B cell (primary cell): ENCODE measurements at regions of chr3 and their contacts with region 1.

Region 1: GRCh38 chr3:134473868-134474546 is 11.8 kb downstream of the ANAPC13 start:
- DNase-seq: peak; percentile 76
- ATAC-seq: peak; percentile 58
- H3K4me3 ChIP-seq: no peak overlapping the region
- H3K4me3 Mint-ChIP-seq: no peak overlapping the region
- H3K27ac ChIP-seq: no peak overlapping the region
- H3K27ac Mint-ChIP-seq: no peak overlapping the region
- H3K4me1 ChIP-seq: no peaks in the 10 kb centered on the region
- H3K4me1 Mint-ChIP-seq: no peaks in the 10 kb centered on the region
- H3K27me3 ChIP-seq: no peaks in the 10 kb centered on the region
- H3K27me3 Mint-ChIP-seq: no peaks in the 10 kb centered on the region
- CTCF ChIP-seq: peak; percentile 81

Region 2: GRCh38 chr3:133620066-133620784 is 853.8 kb before region 1 on chr3:
- CTCF ChIA-PET with region 1: no interaction called
- POLR2A ChIA-PET with region 1: no interaction called
- intact Hi-C with region 1: no loop called
- DNase-seq: peak; percentile 77
- ATAC-seq: peak; percentile 97
- H3K4me3 ChIP-seq: no peak overlapping the region
- H3K4me3 Mint-ChIP-seq: peak overlapping the region; percentile 52
- H3K27ac ChIP-seq: peak overlapping the region; percentile 33 to 59
- H3K27ac Mint-ChIP-seq: peak overlapping the region; percentile 83
- H3K4me1 ChIP-seq: peaks cover 0 to 12% of the 10 kb centered on the region in 2 donors
- H3K4me1 Mint-ChIP-seq: peaks cover 13% of the 10 kb centered on the region
- H3K27me3 ChIP-seq: no peaks in the 10 kb centered on the region
- H3K27me3 Mint-ChIP-seq: no peaks in the 10 kb centered on the region
- CTCF ChIP-seq: no peak

Region 3: DNA sequence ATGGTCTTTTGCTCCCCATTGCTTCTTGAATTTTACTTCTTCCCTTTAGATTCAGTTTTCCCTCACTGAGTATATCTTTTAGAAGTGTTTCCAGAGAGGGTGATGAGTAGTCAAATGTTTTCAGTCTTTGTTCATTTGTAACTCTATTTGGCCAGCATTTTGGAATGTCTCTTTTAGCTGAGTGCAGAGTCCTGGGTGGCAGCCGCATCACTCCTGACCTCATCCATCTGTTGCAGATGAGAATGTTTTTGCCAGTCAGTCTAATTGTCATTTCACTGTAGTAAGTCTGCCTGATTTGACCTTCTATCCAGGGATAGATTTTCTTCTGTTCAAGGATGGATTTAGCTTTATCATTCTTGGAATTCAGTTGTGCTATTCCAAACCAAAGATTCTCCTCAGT is 661.1 kb before region 1 on chr3:
- CTCF ChIA-PET with region 1: interaction called, 5 read pairs
- POLR2A ChIA-PET with region 1: no interaction called
- intact Hi-C with region 1: loop called (anchors 5 kb)
- DNase-seq: no peak
- ATAC-seq: no peak
- H3K4me3 ChIP-seq: no peak overlapping the region
- H3K4me3 Mint-ChIP-seq: no peak overlapping the region
- H3K27ac ChIP-seq: no peak overlapping the region
- H3K27ac Mint-ChIP-seq: no peak overlapping the region
- H3K4me1 ChIP-seq: no peaks in the 10 kb centered on the region
- H3K4me1 Mint-ChIP-seq: no peaks in the 10 kb centered on the region
- H3K27me3 ChIP-seq: no peaks in the 10 kb centered on the region
- H3K27me3 Mint-ChIP-seq: no peaks in the 10 kb centered on the region
- CTCF ChIP-seq: no peak

Region 4: DNA sequence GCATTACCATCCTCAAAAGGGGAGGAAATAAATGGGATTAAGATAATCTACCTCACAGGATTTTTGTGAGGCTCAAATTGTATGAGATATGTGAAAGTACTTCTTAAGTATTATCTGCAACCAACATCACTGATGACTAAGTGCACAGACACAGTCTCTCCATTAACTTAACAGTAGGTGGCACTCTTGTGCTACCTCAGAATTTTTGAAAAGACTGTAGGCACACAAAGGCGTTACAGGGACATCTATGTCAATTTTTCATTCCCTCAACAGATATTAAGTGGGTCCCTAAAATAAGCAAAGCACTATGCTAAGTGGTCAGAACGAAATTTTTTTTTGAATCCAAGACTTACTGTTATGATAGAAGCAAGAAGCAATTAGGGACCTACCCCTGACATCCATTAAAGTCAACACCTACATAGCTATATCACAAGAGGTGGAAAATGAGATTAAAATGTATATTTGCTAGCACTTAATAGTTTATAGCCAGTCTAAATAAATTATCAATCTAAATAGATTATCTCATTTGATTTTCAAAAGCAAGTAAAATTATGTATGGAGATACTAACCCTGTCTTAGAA is 276.2 kb before region 1 on chr3:
- CTCF ChIA-PET with region 1: interaction called, 121 read pairs
- POLR2A ChIA-PET with region 1: no interaction called
- intact Hi-C with region 1: loop called (anchors 1 kb)
- DNase-seq: peak; percentile 52
- ATAC-seq: peak; percentile 54
- H3K4me3 ChIP-seq: no peak overlapping the region
- H3K4me3 Mint-ChIP-seq: no peak overlapping the region
- H3K27ac ChIP-seq: no peak overlapping the region
- H3K27ac Mint-ChIP-seq: no peak overlapping the region
- H3K4me1 ChIP-seq: no peaks in the 10 kb centered on the region
- H3K4me1 Mint-ChIP-seq: no peaks in the 10 kb centered on the region
- H3K27me3 ChIP-seq: no peaks in the 10 kb centered on the region
- H3K27me3 Mint-ChIP-seq: no peaks in the 10 kb centered on the region
- CTCF ChIP-seq: peak; percentile 78

Region 5: DNA sequence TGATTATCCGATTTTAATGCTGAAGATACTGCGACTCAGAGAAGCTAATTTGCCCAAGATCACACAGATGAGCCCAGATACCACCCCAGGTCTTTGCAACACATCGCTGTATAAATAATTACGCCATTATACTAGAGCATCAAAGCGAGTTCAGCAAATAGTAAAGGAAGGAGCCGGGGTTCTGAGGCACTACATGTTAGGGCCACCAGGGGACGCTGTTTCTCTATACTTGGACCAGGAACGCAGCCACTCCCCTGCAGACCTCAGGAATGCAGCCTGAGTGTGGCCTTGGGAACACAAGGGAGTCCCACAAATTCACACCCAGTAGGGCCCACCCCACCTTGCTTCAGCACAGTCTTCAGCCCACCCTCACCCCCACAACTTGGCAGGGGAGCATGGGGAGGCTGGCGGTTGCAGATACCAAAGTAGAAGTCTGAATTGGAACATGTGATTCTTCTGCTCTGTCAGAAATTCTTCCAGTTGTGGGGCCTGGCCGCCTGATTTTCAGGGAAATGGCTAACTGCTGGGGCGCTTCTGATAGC is 165.6 kb before region 1 on chr3:
- CTCF ChIA-PET with region 1: interaction called, 17 read pairs
- POLR2A ChIA-PET with region 1: no interaction called
- intact Hi-C with region 1: loop called (anchors 1 kb)
- DNase-seq: peak; percentile 66
- ATAC-seq: peak; percentile 80
- H3K4me3 ChIP-seq: peak overlapping the region in 1 of 5 experiments; percentile 18
- H3K4me3 Mint-ChIP-seq: no peak overlapping the region
- H3K27ac ChIP-seq: no peak overlapping the region
- H3K27ac Mint-ChIP-seq: no peak overlapping the region
- H3K4me1 ChIP-seq: peaks cover 2 to 6% of the 10 kb centered on the region in 2 donors
- H3K4me1 Mint-ChIP-seq: peaks cover 3% of the 10 kb centered on the region
- H3K27me3 ChIP-seq: peaks cover 0 to 28% (median 9%) of the 10 kb centered on the region in 4 experiments
- H3K27me3 Mint-ChIP-seq: peaks cover 27% of the 10 kb centered on the region
- CTCF ChIP-seq: peak; percentile 89

Region 6: GRCh38 chr3:134552784-134553183 is 78.8 kb after region 1 on chr3:
- CTCF ChIA-PET with region 1: no interaction called
- POLR2A ChIA-PET with region 1: no interaction called
- intact Hi-C with region 1: no loop called
- DNase-seq: no peak
- ATAC-seq: no peak
- H3K4me3 ChIP-seq: no peak overlapping the region
- H3K4me3 Mint-ChIP-seq: no peak overlapping the region
- H3K27ac ChIP-seq: no peak overlapping the region
- H3K27ac Mint-ChIP-seq: no peak overlapping the region
- H3K4me1 ChIP-seq: no peaks in the 10 kb centered on the region
- H3K4me1 Mint-ChIP-seq: no peaks in the 10 kb centered on the region
- H3K27me3 ChIP-seq: no peaks in the 10 kb centered on the region
- H3K27me3 Mint-ChIP-seq: no peaks in the 10 kb centered on the region
- CTCF ChIP-seq: no peak